ENCODE measurements at regions of chr17 and their contacts with region 1.

Region 1: DNA sequence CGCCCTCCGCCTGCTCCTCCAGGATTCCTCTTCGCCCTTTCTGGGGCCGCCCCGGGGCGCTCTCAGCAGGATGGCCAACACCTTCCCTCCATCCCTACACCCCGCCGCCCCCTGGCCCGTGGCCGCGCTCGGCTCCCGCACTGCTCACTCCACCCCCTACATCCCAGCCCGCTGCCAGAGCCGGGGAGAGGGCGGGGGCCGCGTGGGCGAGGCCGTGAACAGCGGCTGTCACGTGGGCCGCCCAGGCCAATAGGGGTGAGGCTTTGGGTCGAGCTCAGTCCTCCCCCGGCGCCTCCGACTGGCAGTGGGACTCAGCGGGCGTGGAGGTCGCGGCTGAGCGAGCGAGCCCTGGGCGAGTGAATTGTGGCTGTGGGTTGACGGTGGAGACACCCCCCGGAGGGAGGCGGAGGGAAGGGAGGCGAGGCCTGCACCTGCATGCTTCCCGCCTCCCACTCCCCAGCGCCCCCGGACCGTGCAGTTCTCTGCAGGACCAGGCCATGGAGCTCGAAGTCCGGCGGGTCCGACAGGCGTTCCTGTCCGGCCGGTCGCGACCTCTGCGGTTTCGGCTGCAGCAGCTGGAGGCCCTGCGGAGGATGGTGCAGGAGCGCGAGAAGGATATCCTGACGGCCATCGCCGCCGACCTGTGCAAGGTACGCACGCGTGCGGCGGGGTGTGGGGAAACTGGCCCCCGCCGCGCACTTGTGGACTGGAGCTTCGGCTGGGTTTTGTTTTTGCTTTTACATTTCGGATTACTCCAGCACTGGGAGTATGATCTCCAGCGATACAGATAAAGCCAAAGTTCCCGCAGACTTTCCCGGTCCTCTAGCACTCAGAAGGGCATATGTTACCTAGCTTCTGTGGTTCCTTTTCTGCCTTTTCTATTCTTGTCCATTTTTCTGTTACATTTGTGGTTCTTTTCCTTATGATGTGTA is at the start of gene ALDH3A2:
- DNase-seq: peak; percentile 91
- H3K4me3 ChIP-seq: peak within 1 kb of the TSS; percentile 78 to 94 (median 84)
- H3K27ac ChIP-seq: peak within 1 kb of the TSS; percentile 72
- H3K4me1 ChIP-seq: peaks cover 40% of the 10 kb centered on the region
- H3K27me3 ChIP-seq: no peaks in the 10 kb centered on the region
- CTCF ChIP-seq: no peak
- total RNA-seq, gene ALDH3A2: 59.5 to 212 TPM

Region 2: GRCh38 chr17:19579867-19580565 is 68.7 kb before region 1 on chr17:
- CTCF ChIA-PET with region 1: no interaction called
- dilution Hi-C with region 1: no loop called
- in situ Hi-C with region 1: no loop called
- intact Hi-C with region 1: loop called (anchors 5 kb)
- DNase-seq: no peak
- H3K4me3 ChIP-seq: peak overlapping the region in 2 of 3 experiments; percentile 7 to 34
- H3K27ac ChIP-seq: no peak overlapping the region
- H3K4me1 ChIP-seq: peaks cover 5% of the 10 kb centered on the region
- H3K27me3 ChIP-seq: peaks cover 12% of the 10 kb centered on the region
- CTCF ChIP-seq: no peak

Region 3: GRCh38 chr17:19630661-19631060 is 18.1 kb before region 1 on chr17:
- CTCF ChIA-PET with region 1: no interaction called
- dilution Hi-C with region 1: no loop called
- in situ Hi-C with region 1: no loop called
- intact Hi-C with region 1: no loop called
- DNase-seq: no peak
- H3K4me3 ChIP-seq: no peak overlapping the region
- H3K27ac ChIP-seq: no peak overlapping the region
- H3K4me1 ChIP-seq: no peaks in the 10 kb centered on the region
- H3K27me3 ChIP-seq: no peaks in the 10 kb centered on the region
- CTCF ChIP-seq: no peak

Region 4: DNA sequence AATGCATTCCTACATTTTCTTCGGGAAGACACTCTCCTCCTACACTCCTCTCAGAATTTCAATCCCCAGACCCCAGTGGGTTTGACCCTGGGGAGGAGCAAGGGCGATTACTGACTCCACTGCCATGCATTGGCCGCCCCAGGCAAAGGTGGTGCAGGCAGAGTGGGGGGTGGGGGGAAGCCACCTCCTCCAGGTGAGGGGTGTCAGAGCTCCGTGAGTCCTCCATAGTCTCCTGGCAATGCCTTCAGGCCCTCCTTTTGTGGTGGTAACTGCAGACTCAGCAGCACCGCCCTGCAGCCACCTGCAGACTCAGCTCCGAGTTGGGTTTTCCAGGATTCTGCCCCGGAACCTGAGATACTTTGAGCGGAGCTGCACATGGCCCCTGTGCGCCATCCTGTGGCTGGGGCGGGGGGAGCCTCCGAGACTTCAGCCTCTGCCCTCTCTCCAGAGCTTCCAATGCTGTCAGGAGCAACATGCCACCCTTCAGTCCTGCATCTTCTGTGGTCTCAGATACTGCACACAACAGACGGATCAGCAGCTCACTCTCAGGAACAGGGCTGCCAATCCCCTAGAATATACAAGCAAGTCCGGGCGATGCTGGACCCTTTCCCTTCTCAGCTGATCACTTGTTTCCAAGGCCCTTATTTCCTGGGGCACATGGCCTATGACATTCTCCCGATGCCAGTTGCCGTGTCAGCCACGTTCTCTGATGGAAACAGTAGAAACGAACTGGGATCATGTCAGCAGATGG is 70.0 kb after region 1 on chr17:
- CTCF ChIA-PET with region 1: interaction called, 14 read pairs
- dilution Hi-C with region 1: loop called (anchors 5 kb)
- in situ Hi-C with region 1: no loop called
- intact Hi-C with region 1: loop called (anchors 1 kb)
- DNase-seq: peak; percentile 23
- H3K4me3 ChIP-seq: no peak overlapping the region
- H3K27ac ChIP-seq: peak overlapping the region; percentile 45
- H3K4me1 ChIP-seq: peaks cover 50% of the 10 kb centered on the region
- H3K27me3 ChIP-seq: no peaks in the 10 kb centered on the region
- CTCF ChIP-seq: peak; percentile 49 to 75

Region 5: GRCh38 chr17:19730843-19731242 is 82.1 kb after region 1 on chr17:
- CTCF ChIA-PET with region 1: no interaction called
- dilution Hi-C with region 1: no loop called
- in situ Hi-C with region 1: no loop called
- intact Hi-C with region 1: no loop called
- DNase-seq: no peak
- H3K4me3 ChIP-seq: no peak overlapping the region
- H3K27ac ChIP-seq: no peak overlapping the region
- H3K4me1 ChIP-seq: peaks cover 20% of the 10 kb centered on the region
- H3K27me3 ChIP-seq: no peaks in the 10 kb centered on the region
- CTCF ChIP-seq: no peak

Region 6: GRCh38 chr17:19744922-19745757 is 96.4 kb after region 1 on chr17:
- CTCF ChIA-PET with region 1: no interaction called
- dilution Hi-C with region 1: loop called (anchors 5 kb)
- in situ Hi-C with region 1: loop called in 1 of 2 experiments (anchors 10 kb)
- intact Hi-C with region 1: loop called (anchors 2 kb)
- DNase-seq: peak; percentile 57
- H3K4me3 ChIP-seq: peak overlapping the region in 1 of 3 experiments; percentile 12
- H3K27ac ChIP-seq: no peak overlapping the region
- H3K4me1 ChIP-seq: peaks cover 34% of the 10 kb centered on the region
- H3K27me3 ChIP-seq: no peaks in the 10 kb centered on the region
- CTCF ChIP-seq: peak; percentile 87 to 94

Measured in mammary epithelial cell (primary cell).